ENCODE measurements at regions of chr3 and their contacts with region 1.

Region 1: GRCh38 chr3:99638167-99638948 is at the start of gene COL8A1:
- DNase-seq: peak; percentile 62 to 64
- ATAC-seq: peak; percentile 71 to 91 (median 86)
- H3K4me3 ChIP-seq: peak within 1 kb of the TSS; percentile 37 to 68 (median 58)
- H3K27ac ChIP-seq: peak within 1 kb of the TSS; percentile 59 to 91 (median 84)
- H3K4me1 ChIP-seq: peaks cover 0 to 30% (median 15%) of the 10 kb centered on the region in 9 donors
- H3K27me3 ChIP-seq: peaks cover 0 to 60% (median 27%) of the 10 kb centered on the region in 7 donors
- CTCF ChIP-seq: no peak
- total RNA-seq, gene COL8A1: 7.5 to 32.2 (median 15.1) TPM

Region 2: GRCh38 chr3:99532246-99532645 is 106.1 kb before region 1 on chr3:
- intact Hi-C with region 1: loop called in 1 of 10 experiments (anchors 10 kb)
- DNase-seq: peak in 1 of 2 donors; percentile 23
- ATAC-seq: peak in 5 of 8 donors; percentile 67 to 77 (median 71)
- H3K4me3 ChIP-seq: no peak overlapping the region
- H3K27ac ChIP-seq: no peak overlapping the region
- H3K4me1 ChIP-seq: peaks cover 0 to 6% (median 0%) of the 10 kb centered on the region in 9 donors
- H3K27me3 ChIP-seq: peaks cover 0 to 3% (median 0%) of the 10 kb centered on the region in 7 donors
- CTCF ChIP-seq: peak in 8 of 9 donors; percentile 42 to 66 (median 54)

Region 3: GRCh38 chr3:99551520-99551919 is 86.8 kb before region 1 on chr3:
- intact Hi-C with region 1: loop called in 2 of 10 experiments (anchors 10 kb)
- DNase-seq: no peak
- ATAC-seq: peak in 6 of 8 donors; percentile 14 to 71 (median 66)
- H3K4me3 ChIP-seq: no peak overlapping the region
- H3K27ac ChIP-seq: peak overlapping the region in 6 of 10 donors; percentile 10 to 77 (median 56)
- H3K4me1 ChIP-seq: peaks cover 0 to 43% (median 16%) of the 10 kb centered on the region in 9 donors
- H3K27me3 ChIP-seq: no peaks in the 10 kb centered on the region
- CTCF ChIP-seq: peak in 1 of 9 donors; percentile 17

Region 4: GRCh38 chr3:99686955-99687612 is 48.7 kb after region 1 on chr3:
- intact Hi-C with region 1: loop called in 2 of 10 experiments (anchors 5 kb)
- DNase-seq: peak; percentile 43 to 55
- ATAC-seq: peak in 3 of 8 donors; percentile 46 to 54 (median 48)
- H3K4me3 ChIP-seq: no peak overlapping the region
- H3K27ac ChIP-seq: peak overlapping the region in 1 of 10 donors; percentile 23
- H3K4me1 ChIP-seq: peaks cover 0 to 26% (median 0%) of the 10 kb centered on the region in 9 donors
- H3K27me3 ChIP-seq: peaks cover 0 to 3% (median 0%) of the 10 kb centered on the region in 7 donors
- CTCF ChIP-seq: peak; percentile 43 to 76 (median 67)

Measured in heart right ventricle (tissue), 16 donors.